ENCODE measurements at regions of chr6 and their contacts with region 1.

Region 1: DNA sequence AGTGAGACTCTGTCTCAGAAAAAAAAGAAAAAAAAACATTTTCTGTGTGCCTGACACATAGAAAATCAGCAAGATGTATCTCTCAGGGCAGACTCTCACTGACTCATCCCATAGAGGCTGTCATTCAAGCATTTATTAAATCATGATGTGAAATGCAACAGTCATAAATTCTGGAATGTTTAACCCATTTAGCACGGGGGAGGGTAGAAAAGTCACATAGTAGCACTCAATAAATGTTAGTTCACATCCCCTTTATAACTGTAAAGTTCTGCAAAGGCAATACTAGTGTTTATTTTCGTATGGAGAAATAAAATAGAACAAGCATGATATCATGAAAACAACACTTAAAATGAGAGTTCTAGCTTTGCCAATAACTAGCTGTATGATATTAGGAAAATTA is 15.5 kb upstream of the CARMIL1 start:
- DNase-seq: no peak
- H3K4me3 Mint-ChIP-seq: no peak overlapping the region
- H3K27ac Mint-ChIP-seq: no peak overlapping the region
- H3K4me1 Mint-ChIP-seq: no peaks in the 10 kb centered on the region
- H3K27me3 Mint-ChIP-seq: peaks cover 3% of the 10 kb centered on the region

Region 2: GRCh38 chr6:25053875-25054371 is 209.7 kb before region 1 on chr6:
- CTCF ChIA-PET with region 1: no interaction called
- POLR2A ChIA-PET with region 1: no interaction called
- intact Hi-C with region 1: no loop called
- DNase-seq: peak; percentile 50
- H3K4me3 Mint-ChIP-seq: peak overlapping the region; percentile 9
- H3K27ac Mint-ChIP-seq: peak overlapping the region; percentile 80
- H3K4me1 Mint-ChIP-seq: peaks cover 82% of the 10 kb centered on the region
- H3K27me3 Mint-ChIP-seq: no peaks in the 10 kb centered on the region

Region 3: DNA sequence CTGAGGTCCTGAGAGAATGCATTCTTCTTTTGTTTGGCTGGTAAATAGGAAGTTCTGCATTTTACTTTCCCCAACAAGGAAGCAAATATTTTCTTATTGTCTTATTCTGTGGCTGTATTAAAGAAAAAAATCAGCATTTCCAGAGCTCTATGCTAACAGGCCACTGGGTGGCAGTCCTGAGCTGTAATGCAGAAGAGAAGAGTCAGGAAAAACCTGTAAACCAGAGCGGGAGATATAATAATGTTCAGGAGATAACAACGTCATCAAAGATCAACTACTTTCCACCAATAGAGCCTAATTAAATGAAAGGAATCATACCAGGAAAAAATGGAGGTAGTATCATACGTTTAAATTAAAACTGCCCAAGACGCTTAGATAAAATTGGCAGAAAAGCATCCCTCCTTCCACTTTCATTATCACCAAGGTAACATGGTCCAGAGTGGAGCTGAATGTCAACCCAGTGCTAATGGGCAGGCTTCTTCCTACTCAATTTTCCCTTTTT is 40.1 kb before region 1 on chr6:
- CTCF ChIA-PET with region 1: interaction called, 22 read pairs
- POLR2A ChIA-PET with region 1: no interaction called
- intact Hi-C with region 1: no loop called
- DNase-seq: peak; percentile 72
- H3K4me3 Mint-ChIP-seq: peak overlapping the region; percentile 58
- H3K27ac Mint-ChIP-seq: no peak overlapping the region
- H3K4me1 Mint-ChIP-seq: peaks cover 12% of the 10 kb centered on the region
- H3K27me3 Mint-ChIP-seq: peaks cover 2% of the 10 kb centered on the region

Region 4: DNA sequence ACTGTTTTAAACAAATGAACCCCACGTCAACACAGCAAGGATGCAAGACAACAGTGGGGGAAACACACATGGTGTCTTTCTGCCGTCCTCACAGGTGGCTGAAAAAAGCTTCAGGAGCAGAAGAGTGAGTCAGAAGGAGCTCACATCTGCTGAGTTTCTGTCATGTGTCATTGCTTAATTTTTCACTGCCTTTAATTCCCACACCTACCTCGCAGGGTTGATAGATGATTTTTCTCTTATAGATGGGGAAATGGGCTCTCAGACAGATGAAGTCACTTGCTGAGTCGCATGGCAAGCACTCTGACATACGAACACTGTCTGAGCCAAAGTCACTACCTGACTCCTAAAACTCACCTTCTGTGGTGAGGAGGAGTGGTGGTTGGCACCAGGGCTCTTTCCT is 12.8 kb before region 1 on chr6:
- CTCF ChIA-PET with region 1: interaction called, 29 read pairs
- POLR2A ChIA-PET with region 1: interaction called, 3 read pairs
- intact Hi-C with region 1: no loop called
- DNase-seq: peak; percentile 58
- H3K4me3 Mint-ChIP-seq: no peak overlapping the region
- H3K27ac Mint-ChIP-seq: no peak overlapping the region
- H3K4me1 Mint-ChIP-seq: peaks cover 11% of the 10 kb centered on the region
- H3K27me3 Mint-ChIP-seq: peaks cover 11% of the 10 kb centered on the region

Region 5: DNA sequence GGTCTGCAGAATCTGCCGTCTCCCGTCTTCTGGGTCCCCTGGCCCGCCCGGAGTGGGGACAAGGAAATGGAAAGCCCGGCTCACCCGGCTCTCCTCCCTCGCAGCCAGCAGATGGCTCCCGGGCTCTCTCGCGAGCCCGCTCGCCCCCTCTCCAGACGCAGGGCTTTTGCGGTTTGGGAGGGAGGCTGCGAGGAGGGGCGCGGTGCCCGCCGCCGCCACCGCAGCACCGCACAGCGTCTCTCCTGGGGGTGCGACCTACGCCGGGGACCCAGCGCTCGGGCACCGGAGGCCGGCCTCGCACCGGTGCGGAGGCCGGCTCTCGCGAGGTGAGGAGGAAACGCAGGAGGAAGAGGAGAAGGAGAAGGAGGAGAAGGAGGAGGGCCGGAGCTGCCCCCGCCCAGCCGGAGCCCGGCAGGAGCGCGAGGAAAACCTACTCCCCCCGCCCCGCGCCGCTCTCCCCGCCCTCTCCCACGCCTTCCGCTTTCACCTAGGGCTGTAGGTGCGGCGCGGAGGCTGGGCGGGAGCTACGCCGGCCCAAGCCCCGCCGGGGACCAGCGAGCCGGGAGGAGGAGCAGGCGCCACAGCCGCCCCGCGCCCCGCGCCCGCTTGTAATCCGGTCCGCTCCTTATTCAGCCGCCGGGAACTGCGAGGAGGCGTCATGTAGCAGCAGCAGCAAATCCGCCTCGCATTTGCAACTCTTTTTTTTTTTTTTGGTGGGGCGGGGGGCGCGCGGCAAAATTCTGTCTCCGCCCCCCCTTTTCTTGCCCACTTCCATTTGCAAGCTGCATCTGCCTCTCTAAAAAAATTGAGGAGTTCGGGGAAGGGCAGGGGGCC is 15.5 kb after region 1 on chr6 and contains the start of gene CARMIL1:
- CTCF ChIA-PET with region 1: interaction called, 52 read pairs
- POLR2A ChIA-PET with region 1: no interaction called
- intact Hi-C with region 1: no loop called
- DNase-seq: peak; percentile 77
- H3K4me3 Mint-ChIP-seq: peak within 1 kb of the TSS; percentile 81
- H3K27ac Mint-ChIP-seq: peak within 1 kb of the TSS; percentile 44
- H3K4me1 Mint-ChIP-seq: peaks cover 28% of the 10 kb centered on the region
- H3K27me3 Mint-ChIP-seq: no peaks in the 10 kb centered on the region
- total RNA-seq, gene CARMIL1: 2.4 to 2.7 TPM

Region 6: DNA sequence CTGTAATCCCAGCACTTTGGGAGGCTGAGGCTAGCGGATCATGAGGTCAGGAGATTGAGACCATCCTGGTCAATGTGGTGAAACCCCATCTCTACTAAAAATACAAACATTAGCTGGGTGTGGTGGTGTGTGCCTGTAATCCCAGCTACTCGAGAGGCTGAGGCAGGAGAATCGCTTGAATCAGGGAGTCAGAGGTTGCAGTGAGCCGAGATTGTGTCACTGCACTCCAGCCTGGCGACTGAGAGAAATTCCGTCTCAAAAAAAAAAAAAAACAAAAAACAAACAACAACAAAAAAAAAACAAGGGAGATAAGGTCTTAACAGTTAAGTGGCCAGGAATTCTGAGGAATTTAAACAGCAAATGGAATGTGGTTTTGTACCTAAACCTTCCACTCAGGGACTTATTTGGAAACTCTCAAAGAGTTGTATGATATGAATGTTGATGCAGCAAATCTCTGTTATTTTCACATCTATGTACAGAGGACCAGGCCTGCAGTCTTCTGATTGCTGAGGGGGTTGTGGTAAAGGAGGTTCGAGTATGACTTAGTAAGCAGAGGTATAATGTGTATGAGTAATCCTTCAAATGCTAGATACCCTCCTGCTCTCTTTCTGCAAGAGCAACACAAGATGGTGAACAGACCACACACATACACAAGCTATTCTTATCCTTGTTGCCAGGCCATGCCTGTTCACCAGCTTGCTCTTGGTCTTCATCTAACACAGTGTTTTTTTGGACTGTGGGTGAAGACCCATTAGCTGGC is 213.4 kb after region 1 on chr6:
- CTCF ChIA-PET with region 1: interaction called, 11 read pairs
- POLR2A ChIA-PET with region 1: no interaction called
- intact Hi-C with region 1: no loop called
- DNase-seq: no peak
- H3K4me3 Mint-ChIP-seq: no peak overlapping the region
- H3K27ac Mint-ChIP-seq: no peak overlapping the region
- H3K4me1 Mint-ChIP-seq: no peaks in the 10 kb centered on the region
- H3K27me3 Mint-ChIP-seq: no peaks in the 10 kb centered on the region

Region 7: DNA sequence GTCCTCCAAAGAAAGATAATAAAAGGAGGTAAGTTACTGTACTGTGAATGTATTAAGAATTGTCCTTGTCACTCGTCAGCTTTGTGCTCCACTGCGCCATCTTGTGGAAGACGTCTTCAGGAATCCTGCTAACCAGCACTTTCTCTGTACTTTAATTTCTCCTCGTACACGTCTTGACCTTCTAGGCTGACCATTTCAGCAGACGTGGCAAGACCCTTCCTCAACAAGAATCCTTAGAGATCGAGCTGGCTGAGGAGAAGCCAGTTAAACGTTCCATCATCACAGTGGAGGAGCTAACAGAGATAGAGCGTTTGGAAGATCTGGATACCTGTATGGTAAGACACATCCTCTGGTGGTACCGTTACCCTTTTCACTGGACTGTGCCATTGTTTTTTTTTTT is 292.9 kb after region 1 on chr6:
- CTCF ChIA-PET with region 1: interaction called, 67 read pairs
- POLR2A ChIA-PET with region 1: no interaction called
- intact Hi-C with region 1: loop called (anchors 1 kb)
- DNase-seq: peak; percentile 84
- H3K4me3 Mint-ChIP-seq: no peak overlapping the region
- H3K27ac Mint-ChIP-seq: no peak overlapping the region
- H3K4me1 Mint-ChIP-seq: peaks cover 2% of the 10 kb centered on the region
- H3K27me3 Mint-ChIP-seq: no peaks in the 10 kb centered on the region

Region 8: GRCh38 chr6:25601800-25602673 is 338.4 kb after region 1 on chr6:
- CTCF ChIA-PET with region 1: interaction called, 23 read pairs
- POLR2A ChIA-PET with region 1: no interaction called
- intact Hi-C with region 1: loop called (anchors 1 kb)
- DNase-seq: no peak
- H3K4me3 Mint-ChIP-seq: no peak overlapping the region
- H3K27ac Mint-ChIP-seq: no peak overlapping the region
- H3K4me1 Mint-ChIP-seq: no peaks in the 10 kb centered on the region
- H3K27me3 Mint-ChIP-seq: no peaks in the 10 kb centered on the region